Activated B cell treated with CpG ODN at 0.5 μM for 24 hours (primary cell): ENCODE measurements at regions of chr2 and their contacts with region 1.

Region 1: DNA sequence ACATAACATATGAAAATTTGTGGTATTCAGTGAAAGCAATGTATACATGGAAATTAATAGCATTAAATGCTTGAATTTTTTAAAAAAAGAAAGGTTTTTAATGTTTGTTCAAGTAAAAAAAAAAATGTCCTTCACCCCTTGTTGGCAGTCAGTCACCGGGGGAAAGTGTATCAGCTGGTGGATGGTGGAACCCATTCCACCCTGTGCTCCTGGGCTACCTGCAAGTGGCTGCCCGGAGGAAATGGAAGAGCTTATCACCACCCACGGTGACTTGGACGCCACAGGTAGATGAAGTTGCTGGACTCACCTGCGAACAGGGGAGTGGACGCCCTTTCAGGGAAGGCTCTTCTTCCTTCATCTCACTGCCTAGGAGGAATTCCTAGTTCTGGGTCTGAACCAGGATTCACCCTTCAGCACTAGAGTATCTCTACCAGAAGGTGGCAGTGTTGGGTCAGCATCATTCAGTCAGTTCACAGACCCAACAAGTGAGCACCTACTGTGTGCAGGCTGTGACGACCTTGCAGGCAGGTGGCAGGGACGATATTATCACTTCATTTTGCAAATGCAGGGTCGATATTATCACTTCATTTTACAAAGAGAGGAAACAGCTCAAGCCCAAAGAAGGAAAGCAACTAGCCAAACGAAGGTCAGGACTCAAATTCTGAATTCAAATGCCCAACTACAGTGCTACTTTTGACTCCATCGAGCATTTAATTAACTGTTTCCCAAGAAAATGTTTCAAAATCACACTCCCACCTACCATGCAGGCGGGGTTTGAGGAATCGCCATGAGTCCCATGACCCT is 35.8 kb downstream of the CIB4 start:
- DNase-seq: no peak
- ATAC-seq: no peak
- H3K4me3 Mint-ChIP-seq: no peak overlapping the region
- H3K27ac Mint-ChIP-seq: no peak overlapping the region
- H3K4me1 Mint-ChIP-seq: peaks cover 15% of the 10 kb centered on the region
- H3K27me3 Mint-ChIP-seq: peaks cover 21% of the 10 kb centered on the region
- CTCF ChIP-seq: no peak

Region 2: DNA sequence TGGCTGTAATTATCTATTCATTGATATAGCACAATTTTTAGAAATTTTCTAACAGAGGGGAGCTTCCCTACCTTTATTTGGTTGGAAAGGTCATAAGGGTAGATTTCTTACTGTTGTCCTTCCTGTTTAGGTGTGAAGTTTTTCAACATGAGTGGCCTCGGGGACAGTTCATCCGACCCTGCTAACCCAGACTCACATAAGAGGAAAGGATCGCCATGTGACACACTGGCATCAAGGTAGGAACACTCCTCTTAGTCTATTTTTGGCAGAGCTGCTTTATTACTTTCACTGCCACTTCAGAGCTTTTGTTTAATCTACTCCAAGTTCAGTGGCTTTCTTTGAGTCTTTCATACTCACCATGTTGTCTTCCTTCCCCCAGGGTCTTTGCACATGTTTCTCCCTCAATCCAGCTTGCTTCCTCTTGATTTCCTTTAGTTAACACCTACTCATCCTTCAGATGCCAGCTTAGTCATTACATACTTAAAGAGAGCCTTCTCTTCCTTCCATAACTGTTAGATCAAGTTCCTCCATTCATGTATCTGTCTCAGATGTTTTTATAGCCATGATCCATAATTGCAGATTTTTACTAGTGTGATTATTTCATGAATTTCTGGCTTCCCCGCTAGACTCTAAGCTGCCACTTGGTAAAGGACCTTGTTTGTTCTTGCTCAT is 1946.7 kb before region 1 on chr2:
- CTCF ChIA-PET with region 1: no interaction called
- POLR2A ChIA-PET with region 1: no interaction called
- intact Hi-C with region 1: no loop called
- DNase-seq: no peak
- ATAC-seq: no peak
- H3K4me3 Mint-ChIP-seq: no peak overlapping the region
- H3K27ac Mint-ChIP-seq: no peak overlapping the region
- H3K4me1 Mint-ChIP-seq: peaks cover 14% of the 10 kb centered on the region
- H3K27me3 Mint-ChIP-seq: no peaks in the 10 kb centered on the region
- CTCF ChIP-seq: no peak

Region 3: GRCh38 chr2:26745609-26746327 is 140.4 kb after region 1 on chr2:
- CTCF ChIA-PET with region 1: interaction called, 27 read pairs
- POLR2A ChIA-PET with region 1: no interaction called
- intact Hi-C with region 1: no loop called
- DNase-seq: peak; percentile 54
- ATAC-seq: peak; percentile 70
- H3K4me3 Mint-ChIP-seq: no peak overlapping the region
- H3K27ac Mint-ChIP-seq: no peak overlapping the region
- H3K4me1 Mint-ChIP-seq: peaks cover 13% of the 10 kb centered on the region
- H3K27me3 Mint-ChIP-seq: peaks cover under 1% of the 10 kb centered on the region
- CTCF ChIP-seq: peak; percentile 44